ENCODE measurements at regions of chr14 and their contacts with region 1.

Region 1: DNA sequence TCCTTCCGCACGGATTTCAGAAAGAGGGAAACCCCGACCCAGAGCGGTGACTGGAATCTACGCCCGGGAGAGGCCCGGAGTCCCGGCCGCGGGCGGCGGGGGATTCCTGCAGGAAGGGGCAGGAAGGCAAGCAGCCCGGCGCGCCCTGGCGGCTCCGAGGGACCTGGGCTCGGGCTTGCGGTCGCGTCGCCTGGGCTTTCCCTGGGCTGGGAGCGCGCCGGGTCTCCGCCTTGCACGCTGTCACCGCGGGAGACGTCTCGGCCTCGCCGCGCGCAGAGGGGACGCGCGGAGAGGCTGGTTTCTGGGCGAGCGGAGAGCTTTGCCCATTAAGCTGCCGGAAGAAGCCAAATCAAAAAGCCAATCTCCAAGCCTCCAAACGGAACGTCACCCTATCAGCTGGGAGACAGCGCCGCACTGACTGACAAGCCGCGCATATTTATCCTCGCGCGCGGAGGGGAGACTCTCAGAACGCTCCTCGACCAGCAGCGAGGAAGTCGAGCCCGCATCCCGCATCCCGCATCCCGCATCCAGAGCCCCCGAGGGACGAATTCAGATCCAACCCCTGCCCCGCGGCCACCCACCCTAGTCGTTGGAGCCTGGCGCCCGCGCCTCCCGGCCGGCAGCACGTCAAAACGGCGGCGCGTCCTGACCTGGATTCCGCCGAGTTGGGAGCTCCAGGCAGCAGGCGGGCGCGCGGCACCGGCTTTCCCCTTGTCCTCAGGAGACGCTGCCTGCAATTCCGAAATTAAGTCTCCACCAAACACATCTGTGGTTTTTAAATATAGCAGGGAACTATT is at the start of gene SLC8A3:
- DNase-seq: peak; percentile 85
- H3K4me3 ChIP-seq: peak within 1 kb of the TSS; percentile 57 to 63
- H3K27ac ChIP-seq: peak within 1 kb of the TSS in 1 of 2 experiments; percentile 88; a peak in 2 of 4 replicates
- H3K4me1 ChIP-seq: peaks cover 0 to 33% of the 10 kb centered on the region in 2 experiments; a peak in 2 of 4 replicates
- H3K27me3 ChIP-seq: peaks cover 20% of the 10 kb centered on the region
- CTCF ChIP-seq: no peak
- EP300 ChIP-seq: no peak
- RAD21 ChIP-seq: no peak; the same call in 1 of the 2 replicates
- polyA plus RNA-seq, gene SLC8A3: 0.26 and 0.67 TPM in 2 replicates

Region 2: GRCh38 chr14:70073924-70074566 is 114.8 kb before region 1 on chr14:
- CTCF ChIA-PET with region 1: interaction called, 11 read pairs
- POLR2A ChIA-PET with region 1: interaction called, 6 read pairs
- DNase-seq: peak; percentile 69
- H3K4me3 ChIP-seq: no peak overlapping the region; a peak in 1 of 4 replicates
- H3K27ac ChIP-seq: no peak overlapping the region; a peak in 1 of 4 replicates
- H3K4me1 ChIP-seq: peaks cover 0 to 31% of the 10 kb centered on the region in 2 experiments; a peak in 2 of 4 replicates
- H3K27me3 ChIP-seq: no peaks in the 10 kb centered on the region
- CTCF ChIP-seq: peak; percentile 73
- EP300 ChIP-seq: no peak
- RAD21 ChIP-seq: peak; percentile 82

Region 3: GRCh38 chr14:70086685-70087379 is 102.0 kb before region 1 on chr14:
- CTCF ChIA-PET with region 1: interaction called, 19 read pairs
- POLR2A ChIA-PET with region 1: interaction called, 3 read pairs
- DNase-seq: peak; percentile 22
- H3K4me3 ChIP-seq: no peak overlapping the region
- H3K27ac ChIP-seq: peak overlapping the region in 1 of 2 experiments; percentile 81; a peak in 2 of 4 replicates
- H3K4me1 ChIP-seq: peaks cover 0 to 16% of the 10 kb centered on the region in 2 experiments; a peak in 2 of 4 replicates
- H3K27me3 ChIP-seq: no peaks in the 10 kb centered on the region
- CTCF ChIP-seq: peak; percentile 60
- EP300 ChIP-seq: peak in 1 of 2 experiments; percentile 53; a peak in 1 of 4 replicates
- RAD21 ChIP-seq: peak; percentile 78

Region 4: DNA sequence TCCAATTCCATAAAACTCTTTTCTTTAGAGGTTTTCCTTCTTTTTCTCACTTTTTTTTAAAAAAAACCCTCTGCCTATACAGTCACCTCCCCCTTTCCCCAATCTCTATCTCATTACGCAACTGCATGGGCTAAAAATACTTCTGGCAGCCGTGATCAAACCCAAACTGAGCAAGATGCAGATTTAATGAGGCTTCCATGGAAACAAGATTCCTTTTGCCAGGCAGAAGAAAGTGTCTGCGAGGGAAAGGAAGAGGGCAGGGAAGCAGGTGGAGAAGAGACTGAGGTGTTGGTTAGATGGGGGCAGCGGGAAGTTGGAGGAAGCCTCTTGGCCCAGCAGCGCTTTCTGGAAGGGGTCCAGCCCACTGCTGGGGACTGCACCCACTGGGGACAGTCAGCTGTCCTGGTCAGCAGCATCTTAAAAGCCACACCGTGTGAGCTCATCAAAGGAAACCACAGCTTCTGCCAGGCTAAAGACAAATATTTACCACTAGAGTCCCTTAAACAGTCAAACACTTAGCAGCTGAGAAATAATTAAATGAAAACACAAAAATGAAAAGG is 90.5 kb before region 1 on chr14:
- CTCF ChIA-PET with region 1: interaction called, 7 read pairs
- POLR2A ChIA-PET with region 1: interaction called, 17 read pairs
- DNase-seq: no peak
- H3K4me3 ChIP-seq: no peak overlapping the region
- H3K27ac ChIP-seq: peak overlapping the region in 1 of 2 experiments; percentile 99; a peak in 2 of 4 replicates
- H3K4me1 ChIP-seq: peaks cover 0 to 56% of the 10 kb centered on the region in 2 experiments; a peak in 2 of 4 replicates
- H3K27me3 ChIP-seq: no peaks in the 10 kb centered on the region
- CTCF ChIP-seq: no peak
- EP300 ChIP-seq: no peak
- RAD21 ChIP-seq: no peak

Region 5: GRCh38 chr14:70152704-70153103 is 36.2 kb before region 1 on chr14:
- CTCF ChIA-PET with region 1: interaction called, 5 read pairs
- POLR2A ChIA-PET with region 1: interaction called, 11 read pairs
- DNase-seq: peak; percentile 57
- H3K4me3 ChIP-seq: no peak overlapping the region
- H3K27ac ChIP-seq: peak overlapping the region in 1 of 2 experiments; percentile 56; a peak in 2 of 4 replicates
- H3K4me1 ChIP-seq: peaks cover 0 to 64% of the 10 kb centered on the region in 2 experiments; a peak in 2 of 4 replicates
- H3K27me3 ChIP-seq: no peaks in the 10 kb centered on the region
- CTCF ChIP-seq: no peak
- EP300 ChIP-seq: peak in 1 of 2 experiments; percentile 52; a peak in 1 of 4 replicates
- RAD21 ChIP-seq: peak; percentile 23

Region 6: DNA sequence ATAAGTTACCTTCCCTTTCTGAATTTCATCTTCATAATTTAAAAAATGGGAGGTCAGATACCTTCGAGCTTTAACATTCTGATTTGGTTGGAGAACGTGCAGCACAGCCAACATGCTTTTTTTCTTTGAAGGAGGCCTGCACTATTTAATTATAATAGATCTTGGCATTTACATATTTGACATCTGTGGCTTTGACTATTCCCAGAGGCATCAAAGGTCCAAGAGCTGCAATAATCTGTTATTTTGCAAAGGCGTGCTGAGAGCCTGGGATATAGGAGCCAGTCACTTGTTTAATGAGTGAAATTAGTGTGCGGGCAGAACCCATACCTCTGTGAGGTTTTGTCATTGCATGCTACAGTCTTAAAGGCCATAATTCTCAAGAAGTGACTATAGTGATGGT is 26.5 kb before region 1 on chr14:
- CTCF ChIA-PET with region 1: interaction called, 11 read pairs
- POLR2A ChIA-PET with region 1: interaction called, 11 read pairs
- DNase-seq: peak; percentile 44
- H3K4me3 ChIP-seq: no peak overlapping the region
- H3K27ac ChIP-seq: peak overlapping the region in 1 of 2 experiments; percentile 90; a peak in 2 of 4 replicates
- H3K4me1 ChIP-seq: peaks cover 0 to 18% of the 10 kb centered on the region in 2 experiments; a peak in 2 of 4 replicates
- H3K27me3 ChIP-seq: no peaks in the 10 kb centered on the region
- CTCF ChIP-seq: no peak
- EP300 ChIP-seq: peak in 1 of 2 experiments; percentile 87; a peak in 2 of 4 replicates
- RAD21 ChIP-seq: no peak; the same call in 1 of the 2 replicates

Region 7: GRCh38 chr14:70254476-70254961 is 65.7 kb after region 1 on chr14:
- CTCF ChIA-PET with region 1: interaction called, 4 read pairs
- POLR2A ChIA-PET with region 1: interaction called, 10 read pairs
- DNase-seq: peak; percentile 78
- H3K4me3 ChIP-seq: peak overlapping the region; percentile 44 to 62
- H3K27ac ChIP-seq: peak overlapping the region in 1 of 2 experiments; percentile 73; a peak in 2 of 4 replicates
- H3K4me1 ChIP-seq: no peaks in the 10 kb centered on the region
- H3K27me3 ChIP-seq: no peaks in the 10 kb centered on the region
- CTCF ChIP-seq: no peak
- EP300 ChIP-seq: no peak
- RAD21 ChIP-seq: peak; percentile 3; the same call in 1 of the 2 replicates